ENCODE measurements at regions of chr1 and their contacts with region 1.

Region 1: GRCh38 chr1:1989102-1989542 is 14.5 kb downstream of the CFAP74 start:
- DNase-seq: peak in 2 of 4 experiments; percentile 50 to 70
- ATAC-seq: peak; percentile 80
- H3K4me3 ChIP-seq: no peak overlapping the region
- H3K27ac ChIP-seq: no peak overlapping the region
- H3K4me1 ChIP-seq: peaks cover 19 to 38% of the 10 kb centered on the region in 2 experiments; a peak in 4 of 5 replicates
- H3K27me3 ChIP-seq: peaks cover 41 to 70% of the 10 kb centered on the region in 2 experiments; a peak in 4 of 5 replicates
- CTCF ChIP-seq: no peak
- EP300 ChIP-seq: no peak
- POLR2A ChIP-seq: no peak
- RAD21 ChIP-seq: no peak

Region 2: DNA sequence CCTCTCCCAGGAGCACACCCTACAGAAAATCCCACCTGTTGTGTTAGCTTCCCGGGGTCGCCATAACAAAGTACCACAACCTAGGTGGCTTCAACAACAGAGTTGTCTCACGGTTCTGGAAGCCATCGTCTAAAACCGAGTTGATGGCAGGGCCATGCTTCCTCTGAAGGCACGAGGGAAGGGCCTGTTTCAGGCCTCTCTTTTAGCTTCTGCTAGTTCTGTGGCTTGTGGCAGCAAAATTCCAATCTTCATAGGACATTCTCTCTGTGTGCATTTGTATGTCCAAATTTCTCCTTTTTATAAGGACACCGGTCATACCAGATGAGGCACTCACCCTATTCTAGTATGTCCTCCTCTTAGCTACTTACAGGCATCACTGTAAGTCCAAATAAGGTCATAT is 11.3 kb after region 1 on chr1:
- CTCF ChIA-PET with region 1: interaction called, 3 read pairs
- POLR2A ChIA-PET with region 1: interaction called, 11 read pairs
- in situ Hi-C with region 1: no loop called
- intact Hi-C with region 1: no loop called
- DNase-seq: no peak
- ATAC-seq: no peak
- H3K4me3 ChIP-seq: no peak overlapping the region
- H3K27ac ChIP-seq: no peak overlapping the region
- H3K4me1 ChIP-seq: peaks cover 11 to 12% of the 10 kb centered on the region in 2 experiments
- H3K27me3 ChIP-seq: peaks cover 23 to 48% of the 10 kb centered on the region in 2 experiments
- CTCF ChIP-seq: no peak
- EP300 ChIP-seq: no peak
- POLR2A ChIP-seq: no peak
- RAD21 ChIP-seq: no peak

Region 3: DNA sequence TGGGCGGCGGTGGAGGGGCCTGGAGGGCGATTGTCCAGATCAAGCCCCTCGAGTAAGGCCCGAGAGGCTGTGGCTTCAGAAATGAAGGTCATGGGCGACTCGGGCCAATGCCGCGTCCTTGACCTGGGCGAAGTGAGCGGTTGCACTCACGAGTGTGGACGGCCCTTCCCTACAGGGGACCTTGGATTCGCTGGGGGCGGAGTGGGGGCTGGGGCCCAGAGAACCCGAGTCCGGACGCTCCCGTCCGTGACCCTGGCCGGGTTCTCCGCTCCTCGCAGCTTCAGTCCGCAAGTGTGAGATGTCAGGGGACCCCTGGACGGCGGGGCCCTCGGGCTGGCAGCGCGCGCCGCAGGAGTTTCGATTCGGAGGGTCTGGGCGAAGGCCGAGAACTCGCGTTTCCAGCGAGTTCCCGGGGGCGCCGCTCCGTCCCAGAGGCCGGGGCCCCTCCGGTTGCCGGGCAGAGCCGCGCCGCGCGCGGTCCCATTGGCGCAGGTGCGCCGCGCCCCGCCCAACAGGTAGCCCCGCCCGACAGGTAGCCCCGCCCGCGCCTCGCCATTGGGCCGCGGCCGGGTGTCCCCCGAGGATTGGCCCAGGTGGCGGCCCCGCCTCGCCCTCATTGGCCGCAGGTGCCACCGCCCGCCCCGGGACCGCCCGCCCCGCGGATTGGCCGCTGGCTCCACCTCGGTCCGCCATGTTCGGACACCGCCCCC is 60.8 kb after region 1 on chr1 and contains the start of gene PRKCZ:
- CTCF ChIA-PET with region 1: no interaction called
- POLR2A ChIA-PET with region 1: no interaction called
- in situ Hi-C with region 1: no loop called
- intact Hi-C with region 1: no loop called
- DNase-seq: peak; percentile 45 to 77 (median 75)
- ATAC-seq: peak; percentile 66
- H3K4me3 ChIP-seq: peak within 1 kb of the TSS; percentile 19; the same call in 1 of the 2 replicates
- H3K27ac ChIP-seq: no peak within 1 kb of the TSS
- H3K4me1 ChIP-seq: peaks cover 0 to 66% of the 10 kb centered on the region in 2 experiments; a peak in 2 of 5 replicates
- H3K27me3 ChIP-seq: peaks cover 4 to 52% of the 10 kb centered on the region in 2 experiments; a peak in 3 of 5 replicates
- CTCF ChIP-seq: no peak
- EP300 ChIP-seq: no peak
- POLR2A ChIP-seq: no peak
- RAD21 ChIP-seq: no peak
- polyA plus RNA-seq, gene PRKCZ: 0.07 to 0.25 TPM

Measured in K562 (cell line).